Naive thymus-derived CD4-positive, alpha-beta T cell (primary cell): ENCODE measurements at regions of chr7 and their contacts with region 1.

Region 1: DNA sequence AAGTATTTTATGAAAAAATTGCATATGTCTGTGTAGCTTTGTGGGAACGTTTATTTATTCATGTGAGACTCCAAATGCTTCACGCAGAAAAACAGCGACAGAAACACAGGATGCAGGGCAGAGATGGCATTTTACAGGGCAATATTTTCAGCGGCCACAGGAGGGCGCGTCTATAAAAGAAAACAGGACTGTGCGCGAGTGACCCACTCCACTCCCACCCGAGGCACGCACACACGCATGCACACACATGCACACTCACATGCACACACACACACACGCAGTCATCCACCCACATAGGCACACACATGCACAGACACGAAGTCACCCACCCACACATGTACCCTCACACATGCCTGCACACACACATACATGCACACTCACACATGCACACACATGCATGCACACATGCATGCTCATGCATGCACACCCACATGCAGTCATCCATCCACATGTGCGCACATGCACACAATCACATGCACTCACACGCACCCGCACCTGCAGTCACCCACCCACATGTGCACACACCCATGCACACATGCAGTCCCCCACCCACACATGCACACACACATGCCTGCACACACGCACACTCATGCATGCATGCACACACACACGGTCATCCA is 96.3 kb downstream of the DNAJB6 start:
- DNase-seq: peak; percentile 36 to 72 (median 61)
- ATAC-seq: peak; percentile 78
- H3K4me3 ChIP-seq: peak overlapping the region; percentile 22
- H3K4me3 Mint-ChIP-seq: peak overlapping the region; percentile 7 to 79 (median 59)
- H3K27ac ChIP-seq: no peak overlapping the region
- H3K27ac Mint-ChIP-seq: peak overlapping the region in 5 of 9 donors; percentile 10 to 58 (median 48)
- H3K4me1 ChIP-seq: peaks cover 0 to 12% of the 10 kb centered on the region in 2 donors
- H3K4me1 Mint-ChIP-seq: peaks cover 11 to 22% (median 16%) of the 10 kb centered on the region in 7 donors
- H3K27me3 ChIP-seq: no peaks in the 10 kb centered on the region
- H3K27me3 Mint-ChIP-seq: peaks cover 0 to 9% (median 0%) of the 10 kb centered on the region in 5 donors

Region 2: GRCh38 chr7:157474689-157475088 is 41.6 kb after region 1 on chr7:
- CTCF ChIA-PET with region 1: interaction called, 4 read pairs
- POLR2A ChIA-PET with region 1: interaction called, 9 read pairs
- intact Hi-C with region 1: loop called in 1 of 2 experiments (anchors 1 kb)
- DNase-seq: no peak
- ATAC-seq: no peak
- H3K4me3 ChIP-seq: no peak overlapping the region
- H3K4me3 Mint-ChIP-seq: peak overlapping the region in 5 of 10 donors; percentile 17 to 44 (median 36)
- H3K27ac ChIP-seq: no peak overlapping the region
- H3K27ac Mint-ChIP-seq: peak overlapping the region in 8 of 9 donors; percentile 3 to 97 (median 76)
- H3K4me1 ChIP-seq: peaks cover 21 to 44% of the 10 kb centered on the region in 2 donors
- H3K4me1 Mint-ChIP-seq: peaks cover 41 to 85% (median 63%) of the 10 kb centered on the region in 7 donors
- H3K27me3 ChIP-seq: no peaks in the 10 kb centered on the region
- H3K27me3 Mint-ChIP-seq: no peaks in the 10 kb centered on the region

Region 3: DNA sequence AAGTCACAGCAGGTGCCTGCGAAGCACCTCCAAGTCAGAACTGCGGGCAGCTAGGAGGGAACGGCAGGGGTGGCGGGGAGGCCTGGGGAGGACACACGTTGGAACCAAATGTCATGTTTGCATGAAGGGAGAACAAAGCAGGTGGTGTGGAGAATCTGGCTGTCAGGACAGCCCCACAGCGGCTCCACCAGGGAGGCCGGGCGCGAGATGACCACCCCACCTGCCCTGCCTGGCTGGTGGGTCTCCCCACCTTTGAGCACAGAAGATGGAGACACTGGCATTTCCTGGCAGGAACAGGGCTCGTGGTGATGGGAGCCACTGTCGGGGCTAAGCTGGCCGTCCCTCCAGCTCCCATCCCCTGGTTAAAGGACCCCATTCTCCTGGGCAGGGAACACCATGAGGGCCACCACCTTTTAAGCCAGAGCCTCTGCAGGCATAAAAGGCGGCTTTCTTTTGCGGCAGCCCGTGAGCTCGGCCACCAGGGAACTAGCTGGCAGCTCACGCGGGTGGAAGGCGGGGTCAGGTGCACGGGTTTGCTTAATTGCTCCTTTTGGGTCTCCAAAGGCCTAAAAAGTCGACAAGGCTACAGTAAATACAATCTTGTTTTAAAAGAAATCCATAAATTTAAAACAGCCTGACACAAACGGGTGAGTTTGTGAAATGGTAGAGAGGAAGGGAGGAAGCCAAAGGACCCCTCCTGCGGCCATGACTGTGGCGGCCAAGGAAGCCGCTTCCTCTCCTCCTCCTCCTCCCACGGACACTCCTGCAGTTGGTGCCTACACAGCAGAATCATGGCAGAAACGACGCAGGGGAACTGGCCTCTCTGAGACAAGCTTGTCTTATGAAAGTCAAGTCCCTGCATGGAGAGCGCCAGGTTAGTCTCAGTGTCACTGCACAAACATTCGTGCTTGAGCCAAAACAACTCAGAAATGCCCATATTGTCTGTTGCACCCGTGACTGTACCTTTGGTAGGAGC is 117.5 kb after region 1 on chr7:
- CTCF ChIA-PET with region 1: no interaction called
- POLR2A ChIA-PET with region 1: no interaction called
- intact Hi-C with region 1: loop called in 1 of 2 experiments (anchors 5 kb)
- DNase-seq: no peak
- ATAC-seq: no peak
- H3K4me3 ChIP-seq: no peak overlapping the region
- H3K4me3 Mint-ChIP-seq: no peak overlapping the region
- H3K27ac ChIP-seq: no peak overlapping the region
- H3K27ac Mint-ChIP-seq: no peak overlapping the region
- H3K4me1 ChIP-seq: no peaks in the 10 kb centered on the region
- H3K4me1 Mint-ChIP-seq: peaks cover 0 to 1% (median 0%) of the 10 kb centered on the region in 7 donors
- H3K27me3 ChIP-seq: no peaks in the 10 kb centered on the region
- H3K27me3 Mint-ChIP-seq: no peaks in the 10 kb centered on the region

Region 4: GRCh38 chr7:157576440-157576886 is 143.4 kb after region 1 on chr7:
- CTCF ChIA-PET with region 1: no interaction called
- POLR2A ChIA-PET with region 1: no interaction called
- intact Hi-C with region 1: loop called in 1 of 2 experiments (anchors 5 kb)
- DNase-seq: peak; percentile 29 to 76 (median 71)
- ATAC-seq: peak; percentile 87
- H3K4me3 ChIP-seq: peak overlapping the region; percentile 52
- H3K4me3 Mint-ChIP-seq: peak overlapping the region; percentile 73 to 88 (median 80)
- H3K27ac ChIP-seq: peak overlapping the region; percentile 69
- H3K27ac Mint-ChIP-seq: peak overlapping the region; percentile 86 to 98 (median 93)
- H3K4me1 ChIP-seq: peaks cover 5 to 12% of the 10 kb centered on the region in 2 donors
- H3K4me1 Mint-ChIP-seq: peaks cover 0 to 27% (median 19%) of the 10 kb centered on the region in 7 donors
- H3K27me3 ChIP-seq: no peaks in the 10 kb centered on the region
- H3K27me3 Mint-ChIP-seq: peaks cover 0 to 7% (median 0%) of the 10 kb centered on the region in 5 donors

Region 5: GRCh38 chr7:157625973-157626742 is 193.1 kb after region 1 on chr7:
- CTCF ChIA-PET with region 1: interaction called, 4 read pairs
- POLR2A ChIA-PET with region 1: interaction called, 3 read pairs
- intact Hi-C with region 1: loop called in 1 of 2 experiments (anchors 1 kb)
- DNase-seq: peak in 7 of 9 donors; percentile 54 to 83 (median 80)
- ATAC-seq: peak; percentile 79
- H3K4me3 ChIP-seq: peak overlapping the region; percentile 18
- H3K4me3 Mint-ChIP-seq: peak overlapping the region; percentile 69 to 84 (median 76)
- H3K27ac ChIP-seq: no peak overlapping the region
- H3K27ac Mint-ChIP-seq: peak overlapping the region; percentile 28 to 96 (median 89)
- H3K4me1 ChIP-seq: peaks cover 15 to 71% of the 10 kb centered on the region in 2 donors
- H3K4me1 Mint-ChIP-seq: peaks cover 41 to 81% (median 77%) of the 10 kb centered on the region in 7 donors
- H3K27me3 ChIP-seq: no peaks in the 10 kb centered on the region
- H3K27me3 Mint-ChIP-seq: peaks cover 0 to 48% (median 4%) of the 10 kb centered on the region in 5 donors

Region 6: DNA sequence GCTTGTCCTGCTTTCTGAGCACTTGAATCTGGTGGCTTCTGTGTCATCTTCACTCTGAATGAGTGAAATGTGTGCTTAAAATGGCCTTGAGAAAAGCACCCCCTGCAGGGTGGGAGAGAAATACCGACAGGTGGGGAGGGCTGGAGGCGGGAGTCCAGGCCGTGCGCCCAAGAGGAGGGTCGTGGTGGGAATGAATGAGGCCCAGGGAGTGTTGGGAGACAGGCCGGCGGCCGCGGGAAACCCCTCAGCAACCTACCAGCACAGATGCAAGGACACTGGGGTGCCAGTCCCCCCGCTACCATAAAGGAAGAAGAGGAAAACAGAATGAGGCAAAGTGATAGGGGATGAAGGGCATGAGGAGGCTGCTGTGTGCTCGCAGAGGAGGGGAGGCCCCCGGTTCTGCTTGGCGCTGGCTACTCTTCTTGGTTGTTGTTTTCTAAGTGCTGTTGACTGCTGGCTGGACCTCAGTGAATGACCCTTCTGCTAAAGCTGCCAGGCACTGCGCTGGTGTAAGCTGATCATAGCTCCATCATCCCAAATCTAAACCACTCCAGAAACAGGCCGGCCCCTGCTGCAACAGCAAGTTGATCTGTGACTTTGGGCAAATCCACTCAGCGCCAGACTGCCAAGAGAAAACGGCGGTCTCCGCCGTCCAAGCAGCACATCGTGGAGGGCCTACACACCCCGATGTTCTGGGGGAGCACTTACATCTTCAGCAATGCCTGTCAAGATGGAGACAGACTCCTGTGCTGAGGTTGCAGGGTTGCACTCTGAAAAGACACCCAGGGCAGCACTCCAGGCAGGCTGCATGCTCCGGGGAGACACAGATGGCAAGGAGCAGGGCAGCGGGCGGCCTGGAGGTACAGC is 282.2 kb after region 1 on chr7:
- CTCF ChIA-PET with region 1: interaction called, 4 read pairs
- POLR2A ChIA-PET with region 1: no interaction called
- intact Hi-C with region 1: loop called in 1 of 2 experiments (anchors 1 kb)
- DNase-seq: peak in 2 of 9 donors; percentile 30
- ATAC-seq: no peak
- H3K4me3 ChIP-seq: no peak overlapping the region
- H3K4me3 Mint-ChIP-seq: no peak overlapping the region
- H3K27ac ChIP-seq: no peak overlapping the region
- H3K27ac Mint-ChIP-seq: peak overlapping the region in 2 of 9 donors; percentile 17 to 58
- H3K4me1 ChIP-seq: no peaks in the 10 kb centered on the region
- H3K4me1 Mint-ChIP-seq: no peaks in the 10 kb centered on the region
- H3K27me3 ChIP-seq: no peaks in the 10 kb centered on the region
- H3K27me3 Mint-ChIP-seq: peaks cover 0 to 8% (median 0%) of the 10 kb centered on the region in 5 donors